HepG2 (cell line): ENCODE measurements at regions of chr3 and their contacts with region 1.

Region 1: GRCh38 chr3:185937689-185938463 is at the start of gene TRA2B:
- DNase-seq: peak; percentile 93
- ATAC-seq: peak; percentile 92
- H3K4me3 ChIP-seq: peak within 1 kb of the TSS; percentile 85 to 97 (median 95)
- H3K27ac ChIP-seq: peak within 1 kb of the TSS; percentile 96
- H3K4me1 ChIP-seq: peaks cover 29% of the 10 kb centered on the region
- H3K27me3 ChIP-seq: no peaks in the 10 kb centered on the region; a peak in 1 of 5 replicates
- CTCF ChIP-seq: peak; percentile 72
- EP300 ChIP-seq: peak; percentile 34 to 65; a peak in 3 of 4 replicates
- POLR2A ChIP-seq: peak; percentile 99 to 100
- RAD21 ChIP-seq: 0 out of 2 replicates have a peak, but pooled peaks have one; percentile 9
- total RNA-seq, gene TRA2B: 241 and 259 TPM in 2 replicates

Region 2: DNA sequence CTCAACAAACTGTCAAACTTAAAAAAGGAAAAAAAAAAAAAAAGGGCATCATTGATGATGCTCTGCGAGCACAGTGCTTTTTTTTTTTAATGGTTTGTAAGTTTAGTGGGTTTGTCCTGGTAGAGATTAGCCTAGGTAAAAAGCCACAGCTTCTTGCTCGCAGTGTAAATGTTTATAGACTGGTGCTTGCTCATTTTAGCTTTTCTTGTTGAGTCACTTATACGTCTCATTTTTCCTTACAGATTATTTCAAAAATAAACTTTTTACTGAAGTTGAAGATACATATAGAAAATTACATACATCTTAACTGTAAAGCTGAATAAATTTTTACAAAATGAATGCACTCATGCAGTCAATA is 16.5 kb after region 1 on chr3:
- CTCF ChIA-PET with region 1: interaction called, 6 read pairs
- POLR2A ChIA-PET with region 1: interaction called, 52 read pairs
- in situ Hi-C with region 1: no loop called
- intact Hi-C with region 1: no loop called
- DNase-seq: peak; percentile 36
- ATAC-seq: no peak
- H3K4me3 ChIP-seq: peak overlapping the region in 1 of 3 experiments; percentile 22; a peak in 1 of 6 replicates
- H3K27ac ChIP-seq: peak overlapping the region; percentile 82
- H3K4me1 ChIP-seq: peaks cover 46% of the 10 kb centered on the region
- H3K27me3 ChIP-seq: no peaks in the 10 kb centered on the region
- CTCF ChIP-seq: no peak
- EP300 ChIP-seq: no peak
- POLR2A ChIP-seq: no peak
- RAD21 ChIP-seq: no peak

Region 3: GRCh38 chr3:185959609-185960517 is 22.0 kb after region 1 on chr3:
- CTCF ChIA-PET with region 1: no interaction called
- POLR2A ChIA-PET with region 1: interaction called, 28 read pairs
- in situ Hi-C with region 1: no loop called
- intact Hi-C with region 1: no loop called
- DNase-seq: peak; percentile 88
- ATAC-seq: peak; percentile 74
- H3K4me3 ChIP-seq: peak overlapping the region; percentile 14 to 56 (median 53)
- H3K27ac ChIP-seq: peak overlapping the region; percentile 95
- H3K4me1 ChIP-seq: peaks cover 62% of the 10 kb centered on the region
- H3K27me3 ChIP-seq: no peaks in the 10 kb centered on the region
- CTCF ChIP-seq: no peak
- EP300 ChIP-seq: peak in 1 of 2 experiments; percentile 32; a peak in 1 of 4 replicates
- POLR2A ChIP-seq: peak in 1 of 2 experiments; percentile 62; a peak in 2 of 4 replicates
- RAD21 ChIP-seq: no peak

Region 4: DNA sequence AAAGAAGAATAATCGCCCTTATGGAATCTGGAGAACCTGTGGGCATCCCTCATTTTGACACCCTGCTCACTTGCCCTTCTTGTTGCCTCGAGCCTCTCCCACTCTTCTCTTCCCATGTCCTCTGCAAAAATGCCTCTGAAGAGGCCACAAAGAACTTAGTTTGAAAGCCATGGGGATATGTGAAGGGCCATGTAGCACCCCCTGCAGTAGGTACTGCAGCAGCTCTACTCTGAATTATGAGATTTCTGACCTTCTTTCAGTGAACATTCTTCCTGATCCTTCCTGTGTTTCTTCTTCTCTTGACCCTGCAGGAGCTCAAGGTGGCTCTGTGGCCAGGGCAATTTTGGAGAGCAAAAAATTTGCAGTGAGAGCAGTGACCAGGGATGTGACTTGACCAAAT is 30.3 kb after region 1 on chr3:
- CTCF ChIA-PET with region 1: interaction called, 8 read pairs
- POLR2A ChIA-PET with region 1: interaction called, 32 read pairs
- in situ Hi-C with region 1: no loop called
- intact Hi-C with region 1: loop called (anchors 2 kb)
- DNase-seq: no peak
- ATAC-seq: no peak
- H3K4me3 ChIP-seq: no peak overlapping the region
- H3K27ac ChIP-seq: peak overlapping the region; percentile 5
- H3K4me1 ChIP-seq: peaks cover 72% of the 10 kb centered on the region
- H3K27me3 ChIP-seq: no peaks in the 10 kb centered on the region
- CTCF ChIP-seq: peak; percentile 34; the same call in 1 of the 2 replicates
- EP300 ChIP-seq: no peak
- POLR2A ChIP-seq: no peak
- RAD21 ChIP-seq: peak; percentile 45; the same call in 1 of the 2 replicates